ENCODE measurements at regions of chr12 and their contacts with region 1.

Region 1: DNA sequence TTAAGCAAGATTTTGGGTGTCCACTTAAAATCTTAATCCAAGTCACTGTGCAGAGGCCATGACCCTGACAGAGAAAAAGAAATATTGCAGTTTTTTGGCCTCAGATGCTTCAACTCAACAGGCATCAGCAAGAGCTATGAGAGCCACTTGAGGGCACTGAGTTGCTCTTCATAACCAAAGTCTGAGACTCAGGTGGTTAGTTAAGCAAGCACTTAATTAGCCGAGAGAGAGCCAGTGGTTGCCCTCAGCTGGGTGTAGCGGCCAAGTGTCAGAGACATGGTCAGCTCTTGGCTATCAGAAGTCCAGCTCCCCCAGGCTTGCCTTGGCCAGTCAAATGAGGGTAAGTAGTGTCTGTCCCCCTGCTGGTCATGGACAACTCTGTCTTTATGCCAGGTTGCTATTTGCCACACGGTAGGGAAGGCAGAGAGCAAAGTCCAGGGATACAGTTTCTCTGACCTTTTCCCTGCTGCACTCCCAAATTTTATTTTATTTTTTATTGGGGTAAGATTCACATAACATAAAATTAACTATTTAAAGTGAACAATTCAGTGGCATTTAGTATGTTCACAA is 9.0 kb upstream of the KRT71 start:
- DNase-seq: peak; percentile 41 to 57
- ATAC-seq: peak; percentile 57 to 85; a peak in 4 of 6 replicates
- H3K4me3 ChIP-seq: no peak overlapping the region
- H3K27ac ChIP-seq: no peak overlapping the region
- H3K4me1 ChIP-seq: no peaks in the 10 kb centered on the region
- CTCF ChIP-seq: peak; percentile 25
- EP300 ChIP-seq: no peak
- POLR2A ChIP-seq: no peak
- RAD21 ChIP-seq: peak in 1 of 2 experiments; percentile 28; a peak in 1 of 5 replicates

Region 2: DNA sequence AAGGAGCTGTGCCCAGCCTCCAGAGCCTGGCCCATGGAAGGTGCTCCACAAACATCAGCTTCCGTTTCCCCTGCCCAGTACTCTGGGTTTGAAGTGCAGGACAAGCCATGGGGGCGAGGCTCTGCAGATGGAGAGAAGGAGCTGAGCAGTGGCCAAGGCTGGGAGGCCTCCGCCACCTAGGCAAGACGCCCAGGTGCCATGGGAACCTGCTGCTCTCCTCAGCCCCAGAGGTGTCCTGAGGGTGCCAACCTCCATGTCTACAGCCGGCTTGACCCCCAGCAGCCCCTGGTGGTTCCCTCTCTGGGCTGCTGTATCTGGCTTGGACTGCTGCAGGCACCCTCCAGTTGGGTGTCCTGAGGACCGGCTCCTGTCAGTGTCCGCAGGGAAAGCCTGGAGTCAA is 21.4 kb before region 1 on chr12:
- CTCF ChIA-PET with region 1: no interaction called
- POLR2A ChIA-PET with region 1: no interaction called
- DNase-seq: no peak
- ATAC-seq: no peak
- H3K4me3 ChIP-seq: no peak overlapping the region
- H3K27ac ChIP-seq: no peak overlapping the region
- H3K4me1 ChIP-seq: peaks cover 23% of the 10 kb centered on the region
- CTCF ChIP-seq: no peak
- EP300 ChIP-seq: no peak
- POLR2A ChIP-seq: no peak
- RAD21 ChIP-seq: no peak

Region 3: DNA sequence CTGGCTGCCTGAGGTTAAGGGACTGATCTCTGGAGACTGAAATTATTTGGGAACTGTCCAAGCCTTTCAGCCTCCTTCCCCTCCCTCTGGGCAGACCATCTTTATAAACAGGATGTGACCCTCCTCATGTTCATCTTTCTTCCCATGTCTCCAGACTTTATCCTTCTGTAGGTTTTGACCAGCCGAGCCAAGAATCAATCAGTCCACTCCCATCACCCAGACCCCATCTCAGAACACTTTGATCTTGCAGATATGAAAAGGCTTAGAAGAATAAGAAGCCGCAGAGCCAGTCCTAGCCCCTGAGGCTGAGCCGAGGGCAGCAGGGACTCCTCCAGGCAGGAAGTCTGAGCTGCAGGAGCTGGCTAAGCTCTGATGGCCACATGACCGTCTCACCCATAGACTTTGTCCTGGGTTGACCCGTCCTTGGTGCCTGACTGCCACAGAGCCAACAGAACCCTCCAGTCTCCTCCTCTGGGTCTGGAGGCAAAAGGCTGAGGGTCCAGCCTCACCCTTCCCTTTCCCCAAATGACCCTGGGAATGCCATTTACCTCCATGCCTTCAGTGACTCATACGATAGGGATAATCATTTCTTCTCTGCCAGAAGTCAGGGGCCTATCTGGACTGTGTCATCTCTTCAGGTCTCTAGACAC is 10.6 kb before region 1 on chr12:
- CTCF ChIA-PET with region 1: interaction called, 10 read pairs
- POLR2A ChIA-PET with region 1: no interaction called
- DNase-seq: no peak
- ATAC-seq: no peak
- H3K4me3 ChIP-seq: no peak overlapping the region
- H3K27ac ChIP-seq: no peak overlapping the region
- H3K4me1 ChIP-seq: 0 out of 3 replicates have a peak, but pooled peaks cover 5% of the 10 kb centered on the region
- CTCF ChIP-seq: no peak
- EP300 ChIP-seq: no peak
- POLR2A ChIP-seq: no peak
- RAD21 ChIP-seq: no peak